Gastrocnemius medialis (tissue), 4 donors: ENCODE measurements at regions of chr2 and their contacts with region 1.

Region 1: DNA sequence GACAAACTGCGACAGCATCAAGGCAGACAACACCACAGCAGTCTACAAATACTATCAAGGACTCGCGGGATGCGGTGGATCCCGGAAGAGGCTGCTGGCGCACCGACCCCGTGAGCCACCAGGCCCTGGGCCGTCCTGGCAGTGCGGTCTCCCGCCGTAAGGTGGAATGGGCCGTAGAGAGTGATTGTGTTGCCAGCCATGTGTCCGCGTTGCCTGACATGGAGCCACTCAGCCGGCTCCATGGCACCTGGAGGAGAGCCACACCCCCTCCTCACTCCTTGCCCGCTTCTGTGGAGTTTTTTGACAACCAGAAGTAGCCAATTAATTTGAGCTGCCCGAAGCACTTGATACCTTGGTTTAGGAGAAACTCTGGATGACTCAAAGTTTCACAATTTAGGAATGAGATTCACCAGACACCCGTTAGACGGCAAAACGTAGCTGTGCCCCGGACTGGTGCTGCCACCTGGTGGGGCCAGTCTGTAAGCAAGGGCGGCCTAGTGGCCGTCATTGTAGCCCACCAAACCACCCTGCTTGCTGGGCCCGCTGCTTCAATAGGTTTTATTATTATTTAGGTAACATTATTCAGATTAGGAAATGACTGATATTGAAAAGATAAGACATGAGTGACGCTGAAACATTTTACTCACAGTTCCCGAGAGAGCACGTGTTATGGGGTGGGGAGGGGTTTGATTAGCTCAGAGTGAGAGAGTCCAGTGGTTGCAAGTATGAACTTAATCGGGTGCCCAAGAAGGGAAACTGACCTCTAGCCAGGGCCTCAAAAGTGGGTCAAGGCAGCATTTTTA is 10.2 kb upstream of the IMP4 start:
- DNase-seq: no peak
- ATAC-seq: peak; percentile 74 to 82
- H3K4me3 ChIP-seq: no peak overlapping the region
- H3K27ac ChIP-seq: no peak overlapping the region
- H3K4me1 ChIP-seq: no peaks in the 10 kb centered on the region
- H3K27me3 ChIP-seq: peaks cover 0 to 9% (median 4%) of the 10 kb centered on the region in 3 donors
- CTCF ChIP-seq: peak; percentile 46 to 86 (median 77)
- POLR2A ChIP-seq: no peak

Region 2: GRCh38 chr2:130181325-130181879 is 151.1 kb before region 1 on chr2 and contains the start of gene SMPD4:
- in situ Hi-C with region 1: loop called (anchors 5 to 25 kb)
- intact Hi-C with region 1: loop called (anchors 2 kb)
- DNase-seq: peak; percentile 91 to 94
- ATAC-seq: peak; percentile 94 to 95
- H3K4me3 ChIP-seq: peak within 1 kb of the TSS; percentile 88 to 99 (median 93)
- H3K27ac ChIP-seq: peak within 1 kb of the TSS; percentile 88 to 93 (median 91)
- H3K4me1 ChIP-seq: peaks cover 5 to 11% of the 10 kb centered on the region in 2 donors
- H3K27me3 ChIP-seq: no peaks in the 10 kb centered on the region
- CTCF ChIP-seq: no peak
- POLR2A ChIP-seq: no peak
- total RNA-seq, gene SMPD4: 19.5 to 33.4 (median 24.5) TPM